Dendritic cell treated with granulocyte-macrophage colony-stimulating factor and Interleukin-4, amounts not matched to agents 40 ng/mL and 50 ng/mL, for 4 days (primary cell): ENCODE measurements at regions of chr3 and their contacts with region 1.

Region 1: DNA sequence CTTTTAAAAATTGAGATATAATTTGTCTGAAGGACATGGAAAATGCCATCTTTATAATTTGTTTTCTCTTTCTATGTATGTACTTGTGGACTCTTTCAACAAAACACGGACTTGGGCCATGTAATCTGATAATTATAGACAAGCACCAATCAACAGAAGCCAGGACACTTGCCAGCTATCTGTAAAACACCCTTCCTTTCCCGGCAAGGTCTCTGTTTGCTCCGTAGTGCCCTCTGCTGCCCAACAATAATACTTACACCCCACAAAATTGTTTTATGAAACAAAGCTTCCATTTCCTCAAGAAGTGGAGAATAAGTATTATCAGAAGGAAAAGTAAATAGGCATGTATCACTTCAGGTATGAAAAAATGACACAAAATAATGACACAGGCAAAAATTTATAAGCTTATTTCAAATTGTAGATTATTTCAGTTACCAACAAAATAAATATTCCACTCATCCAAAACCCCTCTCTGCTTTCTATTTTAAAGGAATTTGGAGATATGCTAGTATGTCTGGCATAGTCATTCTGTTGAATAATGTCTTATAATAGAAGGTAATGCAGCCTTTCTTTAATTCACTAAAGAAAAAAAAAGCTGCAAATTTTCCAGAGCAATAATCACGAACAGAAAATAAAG is 32.8 kb downstream of the MYH15 start:
- H3K4me3 Mint-ChIP-seq: no peak overlapping the region
- H3K27ac Mint-ChIP-seq: no peak overlapping the region
- H3K4me1 Mint-ChIP-seq: no peaks in the 10 kb centered on the region
- H3K27me3 Mint-ChIP-seq: no peaks in the 10 kb centered on the region

Region 2: GRCh38 chr3:107938143-107938542 is 539.5 kb before region 1 on chr3:
- intact Hi-C with region 1: loop called (anchors 5 kb)
- H3K4me3 Mint-ChIP-seq: no peak overlapping the region
- H3K27ac Mint-ChIP-seq: no peak overlapping the region
- H3K4me1 Mint-ChIP-seq: peaks cover 15% of the 10 kb centered on the region
- H3K27me3 Mint-ChIP-seq: no peaks in the 10 kb centered on the region

Region 3: GRCh38 chr3:108022256-108023097 is 455.2 kb before region 1 on chr3:
- intact Hi-C with region 1: no loop called
- H3K4me3 Mint-ChIP-seq: no peak overlapping the region
- H3K27ac Mint-ChIP-seq: no peak overlapping the region
- H3K4me1 Mint-ChIP-seq: peaks cover 21% of the 10 kb centered on the region
- H3K27me3 Mint-ChIP-seq: peaks cover 10% of the 10 kb centered on the region

Region 4: GRCh38 chr3:108153451-108153981 is 324.1 kb before region 1 on chr3:
- intact Hi-C with region 1: loop called (anchors 5 kb)
- H3K4me3 Mint-ChIP-seq: no peak overlapping the region
- H3K27ac Mint-ChIP-seq: no peak overlapping the region
- H3K4me1 Mint-ChIP-seq: peaks cover 26% of the 10 kb centered on the region
- H3K27me3 Mint-ChIP-seq: no peaks in the 10 kb centered on the region

Region 5: DNA sequence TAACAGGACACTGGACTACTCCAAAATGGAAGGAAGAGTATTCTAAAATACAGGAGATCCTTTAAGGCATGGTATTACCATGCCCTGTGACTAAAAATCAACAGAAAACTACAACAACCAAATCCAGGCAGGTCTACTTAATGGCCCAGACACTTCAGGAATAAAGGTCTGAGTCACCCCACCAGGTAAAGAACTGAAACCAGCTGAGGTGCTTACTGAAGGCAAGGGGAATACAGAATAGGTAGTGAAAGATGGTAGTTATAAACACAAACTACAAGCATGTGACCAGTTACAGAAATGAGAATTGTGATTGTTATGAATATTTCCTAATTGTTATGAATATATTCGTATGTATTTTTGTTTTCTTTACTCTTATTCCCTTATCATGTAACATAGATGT is 268.8 kb before region 1 on chr3:
- intact Hi-C with region 1: no loop called
- H3K4me3 Mint-ChIP-seq: no peak overlapping the region
- H3K27ac Mint-ChIP-seq: no peak overlapping the region
- H3K4me1 Mint-ChIP-seq: no peaks in the 10 kb centered on the region
- H3K27me3 Mint-ChIP-seq: no peaks in the 10 kb centered on the region

Region 6: DNA sequence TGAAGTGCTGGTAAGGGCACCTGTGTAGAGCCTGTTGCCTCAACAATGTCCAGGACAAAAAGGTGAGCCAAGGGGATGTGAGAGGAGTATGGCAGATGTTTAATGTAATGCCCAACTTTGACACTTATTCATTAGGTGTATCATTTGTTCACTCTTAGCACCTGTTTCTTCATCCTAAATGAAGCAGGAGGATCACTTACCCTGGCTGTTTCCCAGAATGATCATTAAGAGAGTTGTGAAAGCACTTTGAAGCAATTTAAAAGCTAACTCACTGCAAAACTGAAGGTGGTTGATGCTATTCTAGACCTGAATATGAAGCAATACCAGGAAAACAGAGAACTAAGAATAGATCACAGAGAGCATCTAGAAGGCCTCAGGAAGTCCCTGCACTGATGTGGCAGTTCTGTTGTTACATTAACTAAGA is 184.7 kb before region 1 on chr3:
- intact Hi-C with region 1: no loop called
- H3K4me3 Mint-ChIP-seq: peak overlapping the region; percentile 20
- H3K27ac Mint-ChIP-seq: peak overlapping the region; percentile 85
- H3K4me1 Mint-ChIP-seq: peaks cover 57% of the 10 kb centered on the region
- H3K27me3 Mint-ChIP-seq: no peaks in the 10 kb centered on the region